B cell (primary cell): ENCODE measurements at regions of chr19 and their contacts with region 1.

Region 1: DNA sequence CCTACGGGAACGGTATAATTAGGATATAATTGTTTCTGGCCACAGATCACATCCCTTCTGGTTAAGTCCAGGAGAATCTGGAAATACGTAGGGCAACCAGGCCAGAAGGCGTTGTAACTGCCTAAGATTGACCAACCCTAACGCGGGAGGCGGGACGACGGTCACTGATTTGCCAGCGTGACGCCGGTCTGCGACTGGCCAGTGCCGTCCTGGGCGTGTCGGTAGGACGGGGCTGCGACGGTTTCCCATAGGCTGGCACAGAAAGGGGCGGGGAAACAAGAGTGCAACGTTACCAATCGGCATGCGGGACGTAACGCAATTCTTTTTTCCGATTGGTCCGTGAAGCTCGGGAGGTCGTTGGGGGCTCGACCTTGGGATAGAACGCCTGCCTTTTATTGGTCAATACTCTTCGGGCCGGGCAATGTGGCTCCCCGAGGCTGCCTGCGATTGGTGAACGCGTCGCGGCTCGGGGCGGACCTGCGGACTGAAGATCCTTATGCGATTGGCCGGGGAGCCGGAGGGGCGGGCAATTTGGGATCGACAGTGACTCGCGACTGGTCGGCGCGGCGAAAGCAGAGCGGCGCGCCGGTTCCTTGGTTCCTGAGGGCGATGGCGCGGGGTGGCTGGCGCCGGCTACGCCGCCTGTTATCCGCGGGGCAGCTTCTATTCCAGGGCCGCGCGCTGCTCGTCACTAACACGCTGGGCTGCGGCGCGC is at the start of gene MPV17L2:
- DNase-seq: peak; percentile 100
- ATAC-seq: peak; percentile 83
- H3K4me3 ChIP-seq: peak within 1 kb of the TSS; percentile 76 to 92 (median 82)
- H3K4me3 Mint-ChIP-seq: peak within 1 kb of the TSS; percentile 93
- H3K27ac ChIP-seq: peak within 1 kb of the TSS; percentile 86 to 93
- H3K27ac Mint-ChIP-seq: peak within 1 kb of the TSS; percentile 97
- H3K4me1 ChIP-seq: peaks cover 25 to 40% of the 10 kb centered on the region in 2 donors
- H3K4me1 Mint-ChIP-seq: peaks cover 38% of the 10 kb centered on the region
- H3K27me3 ChIP-seq: no peaks in the 10 kb centered on the region
- H3K27me3 Mint-ChIP-seq: no peaks in the 10 kb centered on the region
- CTCF ChIP-seq: no peak
- total RNA-seq, gene MPV17L2: 6.5 and 8.6 TPM in 2 replicates

Region 2: GRCh38 chr19:17496337-17496997 is 696.4 kb before region 1 on chr19:
- CTCF ChIA-PET with region 1: no interaction called
- POLR2A ChIA-PET with region 1: no interaction called
- intact Hi-C with region 1: no loop called
- DNase-seq: peak; percentile 88
- ATAC-seq: peak; percentile 99
- H3K4me3 ChIP-seq: no peak overlapping the region
- H3K4me3 Mint-ChIP-seq: peak overlapping the region; percentile 16
- H3K27ac ChIP-seq: no peak overlapping the region
- H3K27ac Mint-ChIP-seq: no peak overlapping the region
- H3K4me1 ChIP-seq: peaks cover 7 to 21% of the 10 kb centered on the region in 2 donors
- H3K4me1 Mint-ChIP-seq: peaks cover 25% of the 10 kb centered on the region
- H3K27me3 ChIP-seq: no peaks in the 10 kb centered on the region
- H3K27me3 Mint-ChIP-seq: no peaks in the 10 kb centered on the region
- CTCF ChIP-seq: peak; percentile 97

Region 3: DNA sequence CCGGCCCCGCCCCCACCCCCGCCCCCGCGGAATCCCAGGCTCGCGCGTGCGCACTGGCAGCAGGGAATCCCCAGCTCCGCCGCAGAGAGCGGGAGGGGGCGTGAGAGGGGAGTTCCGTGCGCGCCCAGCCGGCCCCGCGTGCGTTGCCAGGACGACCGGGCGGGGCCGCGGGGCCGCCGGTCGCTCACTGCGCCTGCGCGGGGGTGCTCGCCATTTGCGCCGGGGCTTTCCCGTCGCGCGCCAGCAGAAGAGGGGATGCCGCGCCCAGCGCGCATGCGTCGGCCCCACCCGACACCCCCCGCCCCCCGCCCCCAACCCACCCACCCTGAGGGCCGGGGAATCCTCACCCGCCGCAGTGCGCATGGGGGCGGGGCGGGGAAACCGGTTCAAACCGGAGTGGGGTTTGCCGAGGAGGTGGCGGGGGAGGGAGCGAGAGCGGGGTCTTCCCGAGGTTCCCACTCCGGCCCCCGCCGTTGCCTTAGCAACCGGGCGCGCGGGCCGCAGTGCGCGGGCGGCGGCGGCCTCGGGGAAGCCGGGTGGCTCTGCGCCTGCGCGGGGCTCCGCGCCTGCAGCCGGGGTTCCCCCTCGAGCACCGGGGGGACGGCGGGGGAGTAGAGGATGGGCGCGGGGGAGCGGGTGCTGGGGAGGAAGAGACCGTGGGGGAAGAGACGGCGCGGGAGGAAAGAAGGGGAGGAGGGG is 244.9 kb before region 1 on chr19:
- CTCF ChIA-PET with region 1: no interaction called
- POLR2A ChIA-PET with region 1: interaction called, 11 read pairs
- intact Hi-C with region 1: no loop called
- DNase-seq: peak; percentile 97
- ATAC-seq: peak; percentile 64
- H3K4me3 ChIP-seq: peak overlapping the region in 4 of 5 experiments; percentile 46 to 63 (median 58)
- H3K4me3 Mint-ChIP-seq: peak overlapping the region; percentile 88
- H3K27ac ChIP-seq: peak overlapping the region; percentile 55 to 94
- H3K27ac Mint-ChIP-seq: peak overlapping the region; percentile 56
- H3K4me1 ChIP-seq: peaks cover 53 to 61% of the 10 kb centered on the region in 2 donors
- H3K4me1 Mint-ChIP-seq: peaks cover 53% of the 10 kb centered on the region
- H3K27me3 ChIP-seq: peaks cover 0 to 40% (median 27%) of the 10 kb centered on the region in 4 experiments
- H3K27me3 Mint-ChIP-seq: peaks cover 15% of the 10 kb centered on the region
- CTCF ChIP-seq: no peak

Region 4: GRCh38 chr19:18167975-18168645 is 24.7 kb before region 1 on chr19:
- CTCF ChIA-PET with region 1: interaction called, 28 read pairs
- POLR2A ChIA-PET with region 1: interaction called, 45 read pairs
- intact Hi-C with region 1: loop called (anchors 1 kb)
- DNase-seq: peak; percentile 79
- ATAC-seq: peak; percentile 28
- H3K4me3 ChIP-seq: peak overlapping the region in 4 of 5 experiments; percentile 21 to 47 (median 33)
- H3K4me3 Mint-ChIP-seq: peak overlapping the region; percentile 87
- H3K27ac ChIP-seq: peak overlapping the region; percentile 97 to 99
- H3K27ac Mint-ChIP-seq: peak overlapping the region; percentile 98
- H3K4me1 ChIP-seq: peaks cover 50 to 58% of the 10 kb centered on the region in 2 donors
- H3K4me1 Mint-ChIP-seq: peaks cover 52% of the 10 kb centered on the region
- H3K27me3 ChIP-seq: no peaks in the 10 kb centered on the region
- H3K27me3 Mint-ChIP-seq: no peaks in the 10 kb centered on the region
- CTCF ChIP-seq: peak; percentile 80

Region 5: DNA sequence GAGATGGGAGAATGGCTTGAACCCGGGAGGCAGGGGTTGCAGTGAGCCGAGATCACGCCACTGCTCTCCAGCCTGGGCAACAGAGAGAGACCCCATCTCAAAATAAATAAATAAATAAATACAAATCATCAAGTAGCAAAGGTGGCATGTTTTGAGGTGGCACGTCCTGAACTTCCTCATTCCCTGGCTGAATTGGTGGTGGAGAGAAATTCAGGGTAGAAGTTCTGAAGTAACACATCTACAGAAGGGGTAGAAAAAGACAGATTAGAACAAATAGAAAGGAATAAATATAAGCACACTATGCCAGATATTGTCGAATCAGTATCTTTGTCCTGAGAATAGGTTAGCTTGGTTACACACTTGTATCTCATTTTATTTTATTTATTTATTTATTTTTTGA is 12.9 kb before region 1 on chr19:
- CTCF ChIA-PET with region 1: interaction called, 32 read pairs
- POLR2A ChIA-PET with region 1: interaction called, 64 read pairs
- intact Hi-C with region 1: loop called (anchors 1 kb)
- DNase-seq: peak; percentile 55
- ATAC-seq: no peak
- H3K4me3 ChIP-seq: no peak overlapping the region
- H3K4me3 Mint-ChIP-seq: peak overlapping the region; percentile 75
- H3K27ac ChIP-seq: peak overlapping the region in 1 of 2 donors; percentile 21
- H3K27ac Mint-ChIP-seq: peak overlapping the region; percentile 90
- H3K4me1 ChIP-seq: peaks cover 52 to 62% of the 10 kb centered on the region in 2 donors
- H3K4me1 Mint-ChIP-seq: peaks cover 54% of the 10 kb centered on the region
- H3K27me3 ChIP-seq: no peaks in the 10 kb centered on the region
- H3K27me3 Mint-ChIP-seq: no peaks in the 10 kb centered on the region
- CTCF ChIP-seq: no peak

Region 6: DNA sequence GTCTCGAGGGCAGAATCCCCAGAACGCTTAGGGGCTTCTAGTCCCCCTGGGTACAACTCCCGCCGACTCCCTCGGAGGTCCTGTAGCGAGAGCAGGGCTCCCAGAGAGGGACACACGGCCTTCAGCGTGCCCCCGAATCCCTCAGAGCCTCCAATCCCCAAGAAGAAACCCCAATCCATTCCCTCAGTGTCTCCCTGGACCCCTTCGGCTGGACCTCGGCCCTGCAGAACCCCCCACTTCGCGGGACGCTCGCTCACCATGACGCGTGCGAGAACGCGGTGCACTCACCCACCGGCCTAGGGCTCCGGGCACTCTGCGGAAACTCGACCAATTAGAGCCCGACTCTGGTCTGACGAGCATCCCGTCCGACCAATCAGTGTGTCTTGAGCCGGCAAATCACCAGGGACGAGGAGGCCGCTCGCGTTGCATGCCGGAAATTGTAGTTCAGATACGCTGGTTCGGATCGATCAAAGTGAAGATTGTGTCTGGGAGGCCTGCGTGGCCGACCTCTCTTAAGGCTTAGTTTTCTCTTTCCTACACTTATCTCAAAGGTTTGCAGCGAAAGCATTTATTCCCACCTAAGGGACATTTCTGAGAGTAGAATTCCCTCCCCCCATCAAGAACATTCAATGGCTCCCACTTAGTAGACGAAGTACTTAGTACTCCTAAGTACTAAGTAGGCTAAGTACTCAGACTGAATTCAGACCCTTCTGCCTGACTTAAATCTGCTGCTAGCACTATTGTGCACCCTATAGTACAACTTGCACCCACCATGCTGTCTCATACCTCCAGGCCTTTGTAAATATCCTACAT is 945.5 kb after region 1 on chr19 and contains the start of gene TMEM161A:
- CTCF ChIA-PET with region 1: no interaction called
- POLR2A ChIA-PET with region 1: no interaction called
- intact Hi-C with region 1: loop called (anchors 5 kb)
- DNase-seq: peak; percentile 96
- ATAC-seq: peak; percentile 100
- H3K4me3 ChIP-seq: peak within 1 kb of the TSS; percentile 78 to 90 (median 86)
- H3K4me3 Mint-ChIP-seq: peak within 1 kb of the TSS; percentile 97
- H3K27ac ChIP-seq: peak within 1 kb of the TSS; percentile 29 to 70
- H3K27ac Mint-ChIP-seq: peak within 1 kb of the TSS; percentile 93
- H3K4me1 ChIP-seq: peaks cover 15 to 26% of the 10 kb centered on the region in 2 donors
- H3K4me1 Mint-ChIP-seq: peaks cover 41% of the 10 kb centered on the region
- H3K27me3 ChIP-seq: no peaks in the 10 kb centered on the region
- H3K27me3 Mint-ChIP-seq: no peaks in the 10 kb centered on the region
- CTCF ChIP-seq: no peak
- total RNA-seq, gene TMEM161A: 23.2 and 23.6 TPM in 2 replicates